HCT116 (cell line): ENCODE measurements at regions of chr9 and their contacts with region 1.

Region 1: GRCh38 chr9:38651400-38652042 is 31.1 kb upstream of the ANKRD18A start:
- DNase-seq: no peak
- ATAC-seq: no peak
- H3K4me3 ChIP-seq: no peak overlapping the region
- H3K27ac ChIP-seq: no peak overlapping the region
- H3K4me1 ChIP-seq: no peaks in the 10 kb centered on the region
- H3K27me3 ChIP-seq: no peaks in the 10 kb centered on the region; the same call in 1 of the 2 replicates
- CTCF ChIP-seq: no peak
- POLR2A ChIP-seq: no peak
- RAD21 ChIP-seq: no peak

Region 2: GRCh38 chr9:38662763-38663593 is 11.5 kb after region 1 on chr9:
- CTCF ChIA-PET with region 1: no interaction called
- POLR2A ChIA-PET with region 1: no interaction called
- RAD21 ChIA-PET with region 1: no interaction called
- intact Hi-C with region 1: loop called (anchors 2 kb)
- DNase-seq: no peak
- ATAC-seq: no peak
- H3K4me3 ChIP-seq: no peak overlapping the region
- H3K27ac ChIP-seq: no peak overlapping the region
- H3K4me1 ChIP-seq: no peaks in the 10 kb centered on the region
- H3K27me3 ChIP-seq: no peaks in the 10 kb centered on the region
- CTCF ChIP-seq: peak; percentile 34 to 49 (median 36); a peak in 5 of 6 replicates
- POLR2A ChIP-seq: no peak
- RAD21 ChIP-seq: peak; percentile 61